ENCODE measurements at regions of chr12 and their contacts with region 1.

Region 1: DNA sequence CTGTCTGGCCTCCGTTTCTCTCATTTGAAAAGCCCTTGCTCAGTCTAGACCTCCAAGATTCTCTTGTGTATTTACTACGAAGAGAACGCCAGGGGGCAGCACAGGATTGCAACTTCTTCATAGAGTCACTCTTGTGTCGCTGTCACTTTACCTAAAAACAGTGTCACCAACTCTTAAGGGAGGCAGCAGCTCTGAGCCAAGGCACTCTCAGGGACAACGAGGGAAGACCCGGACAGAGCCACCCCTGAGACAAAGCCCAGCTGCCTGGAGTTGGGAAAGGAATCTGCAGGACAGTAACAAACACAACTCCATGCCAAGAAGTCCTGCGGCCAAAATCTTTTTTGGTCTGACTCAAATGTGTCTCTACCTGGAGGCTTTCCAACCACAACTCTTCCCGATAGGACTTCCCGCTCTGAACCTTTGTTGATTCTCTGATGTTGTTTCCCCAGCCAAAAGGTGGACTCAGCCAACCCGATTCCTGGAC is 9.6 kb upstream of the RPAP3 start:
- DNase-seq: peak; percentile 70 to 84 (median 74)
- H3K4me3 ChIP-seq: no peak overlapping the region
- H3K4me3 Mint-ChIP-seq: no peak overlapping the region
- H3K27ac ChIP-seq: no peak overlapping the region
- H3K27ac Mint-ChIP-seq: peak overlapping the region in 4 of 8 donors; percentile 5 to 69 (median 17)
- H3K4me1 ChIP-seq: peaks cover 21% of the 10 kb centered on the region
- H3K4me1 Mint-ChIP-seq: peaks cover 6 to 16% (median 16%) of the 10 kb centered on the region in 3 donors
- H3K27me3 ChIP-seq: no peaks in the 10 kb centered on the region
- H3K27me3 Mint-ChIP-seq: peaks cover 0 to 2% of the 10 kb centered on the region in 2 donors

Region 2: DNA sequence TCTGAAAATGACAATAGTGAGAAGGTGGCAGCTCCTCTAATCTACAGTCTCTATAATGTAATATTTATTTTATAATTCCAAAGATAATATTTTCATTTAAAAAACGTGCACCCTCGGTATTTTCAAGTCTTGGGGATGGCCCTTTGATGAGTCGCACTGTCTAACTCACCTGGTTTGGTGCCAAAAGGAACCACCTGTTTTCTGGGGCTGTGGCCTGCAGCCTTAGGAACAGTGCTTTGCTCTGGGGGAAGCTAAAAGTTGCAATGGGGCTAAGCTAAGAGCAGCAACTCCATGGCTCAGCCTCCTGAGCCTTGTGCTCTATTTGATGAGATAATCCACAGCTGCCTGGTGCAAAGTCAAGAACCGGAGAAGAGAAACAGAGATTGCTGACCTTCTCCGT is 16.3 kb after region 1 on chr12:
- CTCF ChIA-PET with region 1: interaction called, 11 read pairs
- POLR2A ChIA-PET with region 1: interaction called, 3 read pairs
- DNase-seq: no peak
- H3K4me3 ChIP-seq: no peak overlapping the region
- H3K4me3 Mint-ChIP-seq: no peak overlapping the region
- H3K27ac ChIP-seq: no peak overlapping the region
- H3K27ac Mint-ChIP-seq: no peak overlapping the region
- H3K4me1 ChIP-seq: no peaks in the 10 kb centered on the region
- H3K4me1 Mint-ChIP-seq: no peaks in the 10 kb centered on the region
- H3K27me3 ChIP-seq: no peaks in the 10 kb centered on the region
- H3K27me3 Mint-ChIP-seq: peaks cover 0 to under 1% of the 10 kb centered on the region in 2 donors

Region 3: DNA sequence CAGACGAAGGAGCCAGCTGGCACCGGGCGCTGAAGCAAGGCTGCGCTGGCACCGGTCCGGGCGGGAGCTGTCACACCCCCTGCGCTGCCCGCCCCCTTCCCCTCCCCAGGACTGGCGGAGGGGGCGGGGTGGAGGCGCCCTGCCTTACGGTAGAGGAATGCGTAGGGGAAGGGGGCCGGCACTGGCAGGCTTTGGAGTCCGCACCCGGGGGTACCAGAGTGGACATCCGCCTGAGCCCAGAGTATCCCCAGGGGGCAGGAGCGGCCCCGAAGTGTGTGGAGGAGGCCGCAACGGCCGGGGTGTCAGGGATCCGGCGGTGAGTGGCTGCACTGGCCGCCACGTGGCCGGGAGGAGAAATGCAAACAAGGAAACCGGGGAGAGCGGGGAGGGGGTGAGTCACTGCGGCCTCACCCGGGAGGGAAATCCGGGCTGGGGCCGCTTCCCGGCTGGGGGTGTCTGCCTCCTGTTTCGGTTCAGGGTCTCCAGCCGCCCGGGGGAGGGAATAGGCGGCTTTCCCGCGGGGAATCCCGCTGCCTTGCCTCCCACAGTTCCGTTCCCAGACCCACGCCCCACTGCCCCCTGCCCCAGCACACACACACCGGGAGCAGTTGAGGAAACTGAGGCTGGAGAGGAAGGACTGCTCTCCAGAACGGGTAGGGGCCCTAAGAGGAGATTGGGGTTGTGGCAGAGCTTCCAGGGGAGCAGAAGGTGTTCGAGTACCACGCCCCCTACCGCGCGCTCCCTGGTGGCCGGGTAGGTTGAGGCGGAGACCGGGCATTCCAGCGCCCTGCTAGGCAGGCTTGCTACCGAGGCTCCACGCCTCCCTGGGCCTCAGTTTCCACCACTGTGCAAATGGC is 43.6 kb after region 1 on chr12 and contains the start of gene RAPGEF3:
- CTCF ChIA-PET with region 1: interaction called, 23 read pairs
- POLR2A ChIA-PET with region 1: no interaction called
- DNase-seq: peak; percentile 51 to 80 (median 60)
- H3K4me3 ChIP-seq: peak within 1 kb of the TSS; percentile 66
- H3K4me3 Mint-ChIP-seq: peak within 1 kb of the TSS; percentile 68 to 90 (median 75)
- H3K27ac ChIP-seq: peak within 1 kb of the TSS; percentile 31
- H3K27ac Mint-ChIP-seq: peak within 1 kb of the TSS in 3 of 8 donors; percentile 23 to 56 (median 50)
- H3K4me1 ChIP-seq: peaks cover 11% of the 10 kb centered on the region
- H3K4me1 Mint-ChIP-seq: peaks cover 11 to 31% (median 15%) of the 10 kb centered on the region in 3 donors
- H3K27me3 ChIP-seq: no peaks in the 10 kb centered on the region
- H3K27me3 Mint-ChIP-seq: no peaks in the 10 kb centered on the region
- total RNA-seq, gene RAPGEF3: 0.95 to 1.1 TPM

Region 4: GRCh38 chr12:47773062-47773857 is 57.8 kb after region 1 on chr12 and contains the start of gene SLC48A1:
- CTCF ChIA-PET with region 1: interaction called, 169 read pairs
- POLR2A ChIA-PET with region 1: no interaction called
- DNase-seq: peak; percentile 59 to 79 (median 71)
- H3K4me3 ChIP-seq: peak within 1 kb of the TSS; percentile 54
- H3K4me3 Mint-ChIP-seq: peak within 1 kb of the TSS; percentile 84 to 92 (median 86)
- H3K27ac ChIP-seq: peak within 1 kb of the TSS; percentile 74
- H3K27ac Mint-ChIP-seq: peak within 1 kb of the TSS in 7 of 8 donors; percentile 51 to 88 (median 73)
- H3K4me1 ChIP-seq: peaks cover 15% of the 10 kb centered on the region
- H3K4me1 Mint-ChIP-seq: peaks cover 14 to 18% (median 16%) of the 10 kb centered on the region in 3 donors
- H3K27me3 ChIP-seq: no peaks in the 10 kb centered on the region
- H3K27me3 Mint-ChIP-seq: peaks cover 0 to 4% of the 10 kb centered on the region in 2 donors
- total RNA-seq, gene SLC48A1: 10.9 to 11.5 TPM

Region 5: GRCh38 chr12:47779301-47779942 is 64.0 kb after region 1 on chr12:
- CTCF ChIA-PET with region 1: interaction called, 169 read pairs
- POLR2A ChIA-PET with region 1: no interaction called
- DNase-seq: peak; percentile 77 to 92 (median 85)
- H3K4me3 ChIP-seq: no peak overlapping the region
- H3K4me3 Mint-ChIP-seq: peak overlapping the region in 1 of 7 donors; percentile 75
- H3K27ac ChIP-seq: no peak overlapping the region
- H3K27ac Mint-ChIP-seq: peak overlapping the region in 5 of 8 donors; percentile 8 to 66 (median 39)
- H3K4me1 ChIP-seq: peaks cover 8% of the 10 kb centered on the region
- H3K4me1 Mint-ChIP-seq: peaks cover 7 to 15% (median 9%) of the 10 kb centered on the region in 3 donors
- H3K27me3 ChIP-seq: no peaks in the 10 kb centered on the region
- H3K27me3 Mint-ChIP-seq: no peaks in the 10 kb centered on the region

Region 6: DNA sequence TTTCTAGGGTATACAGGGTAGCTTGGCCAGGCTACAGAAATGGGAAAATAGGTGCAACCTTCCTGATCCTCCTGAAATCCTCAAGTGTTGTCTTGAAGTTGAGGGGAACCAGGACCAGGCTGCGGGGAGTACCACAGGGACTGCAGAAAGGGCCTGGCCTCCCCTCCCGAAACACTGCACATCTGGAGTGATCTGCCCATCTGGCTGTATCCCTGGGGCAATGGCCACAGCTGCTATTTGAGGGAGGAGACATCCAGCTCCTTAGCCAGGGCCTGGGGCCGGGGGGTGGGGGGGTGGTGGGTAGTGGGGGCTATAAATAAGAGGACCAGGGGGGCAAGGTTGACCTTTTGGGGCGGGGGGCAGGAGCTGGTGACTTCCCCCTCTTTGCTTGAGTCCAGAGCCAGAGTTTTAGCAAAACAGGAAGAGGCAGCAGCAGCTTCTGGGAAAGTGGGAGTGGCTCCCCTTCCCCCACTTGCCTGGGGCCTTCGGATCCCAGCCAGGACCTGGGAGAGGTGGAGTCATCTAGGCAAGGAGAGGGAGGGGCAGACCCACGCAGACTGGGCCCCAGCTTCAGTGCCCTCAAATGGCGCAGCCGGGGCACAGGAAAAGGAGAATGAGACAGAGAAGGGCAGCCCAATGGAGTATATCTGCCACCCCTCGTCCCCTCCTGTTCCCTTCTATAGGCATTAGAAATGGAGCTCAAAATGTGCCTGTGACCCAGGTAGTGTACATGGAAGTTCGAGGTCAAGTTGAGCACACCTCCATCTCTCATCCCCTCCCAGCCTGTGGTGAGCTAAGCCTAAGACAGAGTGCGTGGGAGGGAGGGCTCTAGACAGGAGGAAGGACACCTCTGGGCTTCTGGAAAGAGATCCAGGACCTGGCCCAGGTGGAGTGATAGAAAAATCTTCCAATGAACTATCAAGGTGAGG is 113.4 kb after region 1 on chr12:
- CTCF ChIA-PET with region 1: interaction called, 11 read pairs
- POLR2A ChIA-PET with region 1: no interaction called
- DNase-seq: no peak
- H3K4me3 ChIP-seq: no peak overlapping the region
- H3K4me3 Mint-ChIP-seq: no peak overlapping the region
- H3K27ac ChIP-seq: peak overlapping the region; percentile 28
- H3K27ac Mint-ChIP-seq: peak overlapping the region in 2 of 8 donors; percentile 11 to 61
- H3K4me1 ChIP-seq: peaks cover 94% of the 10 kb centered on the region
- H3K4me1 Mint-ChIP-seq: peaks cover 56 to 80% (median 76%) of the 10 kb centered on the region in 3 donors
- H3K27me3 ChIP-seq: no peaks in the 10 kb centered on the region
- H3K27me3 Mint-ChIP-seq: no peaks in the 10 kb centered on the region

Measured in CD8-positive, alpha-beta memory T cell (primary cell).